Tibial artery (tissue), 4 donors: ENCODE measurements at regions of chr22 and their contacts with region 1.

Region 1: DNA sequence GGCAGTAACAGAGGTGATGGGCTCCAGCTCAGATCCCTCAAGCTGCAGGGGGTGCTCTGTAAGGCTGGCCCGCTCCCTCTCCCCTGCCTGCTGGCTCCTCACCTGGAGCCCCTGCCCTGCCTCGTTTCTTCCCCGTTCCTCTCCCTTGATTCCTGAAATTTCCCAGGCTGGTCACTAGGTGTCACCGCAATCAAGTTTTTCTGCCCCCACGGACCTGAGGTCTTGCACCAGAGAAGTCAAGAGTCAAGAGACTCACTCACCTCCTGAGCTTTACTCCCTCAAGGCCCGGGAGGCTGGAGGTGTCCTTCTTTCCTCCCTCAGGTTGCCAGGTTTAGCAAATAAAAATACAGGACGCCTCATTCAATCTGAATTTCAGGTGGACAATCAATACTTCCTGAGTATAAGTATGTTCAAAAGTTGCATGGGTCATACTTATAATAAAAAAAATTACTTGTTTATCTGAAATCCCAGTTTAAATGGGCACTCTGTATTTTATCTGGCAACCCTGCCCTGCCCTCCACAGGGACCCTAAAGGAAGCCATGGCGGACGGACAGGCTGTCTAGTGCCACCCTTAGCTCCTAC is 69.2 kb downstream of the SCUBE1 start:
- DNase-seq: peak in 1 of 2 donors; percentile 36
- H3K4me3 ChIP-seq: no peak overlapping the region
- H3K27ac ChIP-seq: no peak overlapping the region
- H3K4me1 ChIP-seq: no peaks in the 10 kb centered on the region
- H3K27me3 ChIP-seq: peaks cover 0 to 47% of the 10 kb centered on the region in 2 donors
- CTCF ChIP-seq: peak; percentile 66 to 81

Region 2: DNA sequence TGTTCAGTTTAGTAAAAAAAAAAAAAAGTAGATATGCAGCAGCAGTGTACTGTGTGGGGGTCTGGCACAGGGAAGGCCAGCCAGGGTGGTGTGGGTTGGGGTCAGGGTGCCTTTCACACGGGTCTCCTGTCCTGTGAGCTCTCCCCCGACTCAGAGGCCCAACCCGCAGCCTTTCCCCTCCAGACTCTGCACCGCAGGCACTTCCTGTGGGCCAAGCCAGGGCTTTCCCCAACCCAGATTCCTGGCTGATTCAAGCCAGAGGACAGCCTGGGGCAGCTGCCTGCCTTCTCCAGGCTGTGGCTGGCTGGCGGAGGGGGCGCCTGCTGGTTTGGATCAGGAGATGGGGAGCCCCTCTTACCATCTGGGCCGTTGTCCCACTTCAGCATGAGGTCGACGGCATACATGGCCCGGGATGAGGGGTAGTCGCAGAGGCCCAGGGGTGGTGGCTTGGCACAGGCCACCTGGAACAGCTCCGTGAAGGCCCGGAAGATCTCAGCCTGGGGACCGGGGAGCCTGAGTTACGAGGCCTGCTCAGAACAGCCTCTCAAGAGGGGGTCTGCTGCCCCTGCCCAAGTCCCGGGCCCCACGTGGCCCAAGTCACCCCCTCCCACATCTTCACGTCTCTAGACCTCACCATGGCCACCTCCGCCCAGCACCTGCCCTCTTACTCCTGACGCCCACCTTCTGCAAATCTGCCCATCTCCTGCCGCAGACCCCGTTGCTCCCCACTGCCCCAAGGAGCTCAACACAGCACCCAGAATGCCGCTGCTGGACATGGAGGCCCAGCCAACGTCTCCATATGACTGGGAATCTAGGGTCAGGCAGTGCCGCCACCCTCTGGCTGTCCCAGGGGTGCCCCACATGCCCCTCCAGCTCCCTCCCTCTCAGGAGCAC is 105.3 kb before region 1 on chr22:
- intact Hi-C with region 1: no loop called
- DNase-seq: no peak
- H3K4me3 ChIP-seq: no peak overlapping the region
- H3K27ac ChIP-seq: peak overlapping the region in 1 of 2 donors; percentile 24
- H3K4me1 ChIP-seq: peaks cover 0 to 18% (median 6%) of the 10 kb centered on the region in 4 donors
- H3K27me3 ChIP-seq: no peaks in the 10 kb centered on the region
- CTCF ChIP-seq: no peak

Region 3: GRCh38 chr22:43346521-43346929 is 72.5 kb after region 1 on chr22:
- intact Hi-C with region 1: loop called (anchors 10 kb)
- DNase-seq: peak in 1 of 2 donors; percentile 36
- H3K4me3 ChIP-seq: no peak overlapping the region
- H3K27ac ChIP-seq: no peak overlapping the region
- H3K4me1 ChIP-seq: peaks cover 0 to 19% (median 15%) of the 10 kb centered on the region in 4 donors
- H3K27me3 ChIP-seq: peaks cover 6 to 81% of the 10 kb centered on the region in 2 donors
- CTCF ChIP-seq: peak; percentile 53 to 61

Region 4: DNA sequence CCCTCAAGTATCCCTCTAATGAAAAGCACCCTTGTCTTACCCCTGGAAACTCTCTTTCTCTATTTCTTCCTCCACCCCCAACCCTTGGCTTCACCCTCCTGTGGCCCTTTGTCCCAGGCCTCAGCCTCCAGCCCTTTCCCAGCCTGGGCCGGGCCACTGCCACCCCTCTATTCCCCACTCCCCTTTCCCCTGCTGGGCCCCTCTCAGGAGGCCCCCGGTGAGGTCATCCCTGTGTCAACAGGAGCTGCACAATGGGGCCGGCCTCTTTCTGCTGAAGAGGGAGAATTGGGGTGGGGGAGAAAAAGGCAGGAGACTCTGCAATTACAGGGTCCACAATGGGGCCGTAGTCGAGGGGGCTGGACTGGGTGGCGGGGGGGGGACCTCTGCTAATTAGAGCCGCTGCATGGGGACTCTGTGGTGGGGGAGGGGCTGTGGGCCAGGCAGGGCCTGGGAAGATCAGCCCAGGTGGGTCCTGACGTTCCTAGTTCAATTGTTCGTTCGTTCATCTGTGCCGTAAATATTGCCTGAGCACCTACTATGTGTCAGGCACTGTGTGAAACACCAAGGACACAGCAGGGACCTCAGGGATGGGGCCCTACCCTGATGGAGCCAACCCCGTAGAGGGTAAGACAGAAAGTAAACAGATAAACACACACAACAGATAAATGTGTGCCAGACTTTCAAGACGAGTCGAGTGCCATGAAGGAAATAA is 119.3 kb after region 1 on chr22:
- intact Hi-C with region 1: loop called (anchors 5 kb)
- DNase-seq: no peak
- H3K4me3 ChIP-seq: no peak overlapping the region
- H3K27ac ChIP-seq: no peak overlapping the region
- H3K4me1 ChIP-seq: no peaks in the 10 kb centered on the region
- H3K27me3 ChIP-seq: peaks cover 0 to 36% of the 10 kb centered on the region in 2 donors
- CTCF ChIP-seq: no peak